SK-N-SH (cell line): ENCODE measurements at regions of chr2 and their contacts with region 1.

Region 1: GRCh38 chr2:134360745-134361487 is 107.0 kb downstream of the MGAT5 start:
- DNase-seq: peak; percentile 60
- H3K4me3 ChIP-seq: no peak overlapping the region
- H3K27ac ChIP-seq: peak overlapping the region in 1 of 2 experiments; percentile 97; a peak in 2 of 4 replicates
- H3K4me1 ChIP-seq: peaks cover 0 to 40% of the 10 kb centered on the region in 2 experiments; a peak in 2 of 4 replicates
- H3K27me3 ChIP-seq: no peaks in the 10 kb centered on the region
- CTCF ChIP-seq: no peak
- EP300 ChIP-seq: peak in 1 of 2 experiments; percentile 89; a peak in 2 of 4 replicates
- RAD21 ChIP-seq: peak; percentile 32; the same call in 1 of the 2 replicates

Region 2: GRCh38 chr2:134087371-134087921 is 273.5 kb before region 1 on chr2:
- CTCF ChIA-PET with region 1: no interaction called
- POLR2A ChIA-PET with region 1: no interaction called
- DNase-seq: no peak
- H3K4me3 ChIP-seq: no peak overlapping the region
- H3K27ac ChIP-seq: no peak overlapping the region
- H3K4me1 ChIP-seq: peaks cover 0 to 7% of the 10 kb centered on the region in 2 experiments; a peak in 1 of 4 replicates
- H3K27me3 ChIP-seq: no peaks in the 10 kb centered on the region; the same call in 1 of the 2 replicates
- CTCF ChIP-seq: no peak
- EP300 ChIP-seq: no peak
- RAD21 ChIP-seq: no peak

Region 3: DNA sequence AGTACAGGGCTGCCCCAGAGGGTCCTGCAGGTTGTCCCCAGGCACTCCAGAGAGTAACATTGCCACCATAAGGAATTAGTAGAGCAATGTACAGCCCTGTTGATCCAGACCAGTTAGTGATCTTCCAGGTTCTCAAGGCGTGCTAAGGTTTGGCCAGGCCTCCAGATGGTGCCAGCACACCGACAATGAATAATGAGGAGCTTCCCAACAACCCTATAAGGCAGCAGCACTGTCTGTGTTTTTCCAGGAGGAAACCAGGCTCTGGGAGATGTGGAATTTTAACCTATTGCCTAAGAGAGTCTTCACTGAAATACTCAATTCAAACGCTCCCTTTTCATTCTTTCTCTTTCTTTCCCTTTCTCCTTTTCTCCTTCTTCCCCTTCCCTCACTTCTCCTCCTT is 15.0 kb after region 1 on chr2:
- CTCF ChIA-PET with region 1: interaction called, 10 read pairs
- POLR2A ChIA-PET with region 1: no interaction called
- DNase-seq: peak; percentile 23
- H3K4me3 ChIP-seq: no peak overlapping the region
- H3K27ac ChIP-seq: peak overlapping the region in 1 of 2 experiments; percentile 34; a peak in 1 of 4 replicates
- H3K4me1 ChIP-seq: peaks cover 0 to 25% of the 10 kb centered on the region in 2 experiments; a peak in 1 of 4 replicates
- H3K27me3 ChIP-seq: no peaks in the 10 kb centered on the region
- CTCF ChIP-seq: peak; percentile 34; the same call in 1 of the 2 replicates
- EP300 ChIP-seq: no peak
- RAD21 ChIP-seq: peak; percentile 75

Region 4: GRCh38 chr2:134773335-134773734 is 412.4 kb after region 1 on chr2:
- CTCF ChIA-PET with region 1: no interaction called
- POLR2A ChIA-PET with region 1: no interaction called
- DNase-seq: peak; percentile 65
- H3K4me3 ChIP-seq: no peak overlapping the region
- H3K27ac ChIP-seq: peak overlapping the region in 1 of 2 experiments; percentile 58; a peak in 2 of 4 replicates
- H3K4me1 ChIP-seq: peaks cover 0 to 25% of the 10 kb centered on the region in 2 experiments; a peak in 2 of 4 replicates
- H3K27me3 ChIP-seq: no peaks in the 10 kb centered on the region
- CTCF ChIP-seq: no peak
- EP300 ChIP-seq: peak in 1 of 2 experiments; percentile 62; a peak in 1 of 4 replicates
- RAD21 ChIP-seq: no peak